Activated B cell treated with CpG ODN at 0.5 μM for 24 hours (primary cell): ENCODE measurements at regions of chr10 and their contacts with region 1.

Region 1: DNA sequence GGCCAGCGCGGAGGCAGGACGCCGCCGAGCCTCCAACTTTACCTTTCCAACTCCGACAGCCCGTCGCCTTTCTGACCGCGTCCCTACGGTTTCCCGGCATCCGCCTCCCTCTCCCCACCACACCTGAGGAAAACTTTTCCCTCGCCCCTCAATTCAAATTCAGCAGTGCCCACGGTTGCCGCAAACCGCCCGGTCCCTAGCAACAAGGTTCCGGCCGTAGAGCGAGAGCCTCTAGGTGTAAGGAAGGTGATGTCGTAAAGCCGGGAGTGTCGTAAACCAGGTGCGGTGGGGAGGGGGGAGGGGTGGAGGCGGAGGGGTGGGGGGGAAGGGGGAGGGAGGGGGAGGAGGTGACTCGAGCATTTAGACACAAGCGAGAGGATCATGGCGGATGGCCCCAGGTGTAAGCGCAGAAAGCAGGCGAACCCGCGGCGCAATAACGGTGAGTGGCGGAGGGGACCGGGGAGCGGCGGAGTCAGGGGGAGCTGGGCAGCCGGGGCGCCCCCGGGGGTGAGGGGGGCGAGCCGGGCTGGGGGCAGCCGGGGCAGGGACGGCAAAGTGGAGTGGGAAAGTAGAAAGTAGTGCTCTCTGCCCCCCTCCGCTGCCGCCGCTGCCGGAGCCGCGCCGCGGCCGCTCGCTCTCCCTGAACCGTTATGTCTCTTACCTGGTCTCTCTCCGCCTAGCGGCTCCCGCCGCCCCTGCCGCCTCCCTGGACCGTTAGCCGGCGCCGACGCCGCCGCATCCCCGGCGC is at the start of gene ZEB1:
- DNase-seq: peak; percentile 80
- ATAC-seq: peak; percentile 53
- H3K4me3 Mint-ChIP-seq: peak within 1 kb of the TSS; percentile 96
- H3K27ac Mint-ChIP-seq: peak within 1 kb of the TSS; percentile 98
- H3K4me1 Mint-ChIP-seq: peaks cover 34% of the 10 kb centered on the region
- H3K27me3 Mint-ChIP-seq: no peaks in the 10 kb centered on the region
- CTCF ChIP-seq: no peak
- total RNA-seq, gene ZEB1: 38.4 and 43.0 TPM in 2 replicates

Region 2: DNA sequence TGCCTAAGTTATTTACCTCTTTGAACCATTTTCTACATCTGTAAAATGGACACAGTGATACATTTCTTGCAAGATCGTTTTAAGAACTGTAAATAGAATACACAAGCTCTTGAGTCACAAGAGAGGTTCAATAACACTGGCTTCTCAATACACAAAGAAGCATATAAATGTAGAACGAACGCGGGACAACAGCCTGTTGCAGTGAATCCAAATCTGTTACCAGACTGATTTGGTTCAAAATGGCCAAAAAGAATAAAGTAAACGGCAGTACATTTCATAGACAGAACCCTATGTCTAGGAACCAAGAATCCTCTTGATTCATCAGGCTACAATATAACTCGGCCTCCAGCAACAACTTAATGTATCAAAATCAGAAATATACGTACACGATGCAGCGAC is 970.7 kb before region 1 on chr10:
- CTCF ChIA-PET with region 1: no interaction called
- POLR2A ChIA-PET with region 1: no interaction called
- intact Hi-C with region 1: loop called (anchors 2 kb)
- DNase-seq: no peak
- ATAC-seq: no peak
- H3K4me3 Mint-ChIP-seq: peak overlapping the region; percentile 99
- H3K27ac Mint-ChIP-seq: peak overlapping the region; percentile 95
- H3K4me1 Mint-ChIP-seq: peaks cover 46% of the 10 kb centered on the region
- H3K27me3 Mint-ChIP-seq: no peaks in the 10 kb centered on the region
- CTCF ChIP-seq: no peak

Region 3: GRCh38 chr10:31031558-31032257 is 287.3 kb before region 1 on chr10 and contains the start of gene ZNF438:
- CTCF ChIA-PET with region 1: interaction called, 6 read pairs
- POLR2A ChIA-PET with region 1: interaction called, 32 read pairs
- intact Hi-C with region 1: loop called (anchors 1 kb)
- DNase-seq: peak; percentile 98
- ATAC-seq: peak; percentile 84
- H3K4me3 Mint-ChIP-seq: peak within 1 kb of the TSS; percentile 89
- H3K27ac Mint-ChIP-seq: peak within 1 kb of the TSS; percentile 97
- H3K4me1 Mint-ChIP-seq: peaks cover 14% of the 10 kb centered on the region
- H3K27me3 Mint-ChIP-seq: no peaks in the 10 kb centered on the region
- CTCF ChIP-seq: no peak
- total RNA-seq, gene ZNF438: 2.9 and 3.9 TPM in 2 replicates

Region 4: DNA sequence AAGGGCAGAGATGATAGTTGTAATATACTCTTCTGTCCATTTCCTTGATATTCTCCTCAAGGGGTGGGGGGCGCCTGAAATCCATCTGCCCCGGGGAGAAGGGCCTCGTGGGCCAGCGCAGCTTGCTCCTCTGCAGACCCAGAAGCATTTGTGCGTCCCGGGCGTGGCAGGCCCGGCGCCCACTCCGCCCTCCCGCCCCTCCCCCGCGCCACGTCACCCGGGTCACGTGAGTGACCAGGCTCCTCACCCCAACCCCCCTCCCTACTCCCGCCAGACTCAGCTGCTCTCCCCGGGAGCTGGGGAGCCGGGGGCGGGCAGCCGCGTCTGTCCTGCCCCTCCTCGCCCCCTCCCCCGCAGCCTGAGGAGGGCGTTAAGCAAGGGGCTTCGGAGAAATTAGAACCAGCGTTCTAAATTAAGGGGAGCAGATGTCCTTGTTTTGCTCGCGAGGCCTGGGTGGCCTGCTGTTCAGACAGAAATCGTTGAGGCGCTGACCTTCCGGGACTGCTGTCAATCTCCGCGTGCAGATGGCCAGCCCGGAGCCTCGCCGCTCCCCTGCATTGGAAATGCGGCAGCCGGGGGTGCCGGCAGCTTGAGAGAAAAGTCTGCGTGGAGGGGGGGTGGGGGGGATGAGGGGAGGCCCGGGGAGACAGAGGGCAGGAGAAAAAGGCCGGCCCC is 185.3 kb before region 1 on chr10:
- CTCF ChIA-PET with region 1: no interaction called
- POLR2A ChIA-PET with region 1: interaction called, 5 read pairs
- intact Hi-C with region 1: loop called (anchors 1 kb)
- DNase-seq: peak; percentile 53
- ATAC-seq: peak; percentile 84
- H3K4me3 Mint-ChIP-seq: peak overlapping the region; percentile 80
- H3K27ac Mint-ChIP-seq: peak overlapping the region; percentile 59
- H3K4me1 Mint-ChIP-seq: peaks cover 20% of the 10 kb centered on the region
- H3K27me3 Mint-ChIP-seq: no peaks in the 10 kb centered on the region
- CTCF ChIP-seq: no peak

Region 5: GRCh38 chr10:31490858-31491504 is 172.0 kb after region 1 on chr10:
- CTCF ChIA-PET with region 1: no interaction called
- POLR2A ChIA-PET with region 1: no interaction called
- intact Hi-C with region 1: loop called (anchors 10 kb)
- DNase-seq: no peak
- ATAC-seq: peak; percentile 45
- H3K4me3 Mint-ChIP-seq: no peak overlapping the region
- H3K27ac Mint-ChIP-seq: no peak overlapping the region
- H3K4me1 Mint-ChIP-seq: no peaks in the 10 kb centered on the region
- H3K27me3 Mint-ChIP-seq: no peaks in the 10 kb centered on the region
- CTCF ChIP-seq: no peak

Region 6: DNA sequence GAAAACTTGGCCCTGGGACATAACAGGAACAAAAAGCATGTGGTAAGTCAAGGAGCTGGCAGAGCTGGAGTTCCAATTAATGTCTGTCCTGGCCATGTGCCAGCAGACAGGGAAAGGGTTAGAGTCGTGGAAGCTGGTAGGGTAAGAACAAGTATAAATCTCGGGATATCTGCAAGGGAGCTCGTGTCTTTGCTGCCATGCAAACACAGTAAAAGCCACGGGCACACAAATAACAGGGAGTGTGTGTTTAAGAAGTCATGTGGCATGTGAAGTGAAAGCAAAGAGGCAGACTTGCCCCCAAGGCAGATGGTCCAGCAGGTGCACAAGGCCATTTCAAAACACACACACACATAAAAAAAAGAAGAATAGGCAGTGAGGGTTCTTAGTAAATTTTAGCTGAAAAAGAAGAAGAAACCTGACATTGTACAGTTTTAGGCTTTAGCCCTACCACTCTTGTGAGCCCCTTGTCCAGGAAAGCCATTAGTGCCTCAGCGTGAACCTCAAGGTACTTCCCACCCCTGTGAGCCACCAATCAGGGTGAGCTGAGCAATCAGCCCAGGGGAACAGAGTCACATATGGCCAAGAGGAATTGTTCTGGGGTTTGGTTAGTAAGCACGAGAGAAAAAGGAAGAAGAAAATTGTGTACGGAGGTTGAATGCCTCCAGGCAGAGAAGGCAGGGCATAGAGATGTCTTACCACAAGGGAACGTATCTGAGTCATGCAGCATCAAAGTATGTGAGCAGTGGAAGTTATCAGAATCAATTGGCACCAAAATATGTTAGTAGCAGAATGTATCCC is 642.4 kb after region 1 on chr10:
- CTCF ChIA-PET with region 1: no interaction called
- POLR2A ChIA-PET with region 1: no interaction called
- intact Hi-C with region 1: no loop called
- DNase-seq: no peak
- ATAC-seq: peak; percentile 85
- H3K4me3 Mint-ChIP-seq: no peak overlapping the region
- H3K27ac Mint-ChIP-seq: no peak overlapping the region
- H3K4me1 Mint-ChIP-seq: peaks cover 12% of the 10 kb centered on the region
- H3K27me3 Mint-ChIP-seq: no peaks in the 10 kb centered on the region
- CTCF ChIP-seq: no peak

Region 7: GRCh38 chr10:32055813-32056600 is 737.0 kb after region 1 on chr10 and contains the start of gene KIF5B:
- CTCF ChIA-PET with region 1: no interaction called
- POLR2A ChIA-PET with region 1: no interaction called
- intact Hi-C with region 1: loop called (anchors 2 kb)
- DNase-seq: peak; percentile 90
- ATAC-seq: peak; percentile 86
- H3K4me3 Mint-ChIP-seq: peak within 1 kb of the TSS; percentile 96
- H3K27ac Mint-ChIP-seq: peak within 1 kb of the TSS; percentile 90
- H3K4me1 Mint-ChIP-seq: peaks cover 56% of the 10 kb centered on the region
- H3K27me3 Mint-ChIP-seq: no peaks in the 10 kb centered on the region
- CTCF ChIP-seq: no peak
- total RNA-seq, gene KIF5B: 44.2 and 45.0 TPM in 2 replicates